ENCODE measurements at regions of chr1 and their contacts with region 1.

Region 1: DNA sequence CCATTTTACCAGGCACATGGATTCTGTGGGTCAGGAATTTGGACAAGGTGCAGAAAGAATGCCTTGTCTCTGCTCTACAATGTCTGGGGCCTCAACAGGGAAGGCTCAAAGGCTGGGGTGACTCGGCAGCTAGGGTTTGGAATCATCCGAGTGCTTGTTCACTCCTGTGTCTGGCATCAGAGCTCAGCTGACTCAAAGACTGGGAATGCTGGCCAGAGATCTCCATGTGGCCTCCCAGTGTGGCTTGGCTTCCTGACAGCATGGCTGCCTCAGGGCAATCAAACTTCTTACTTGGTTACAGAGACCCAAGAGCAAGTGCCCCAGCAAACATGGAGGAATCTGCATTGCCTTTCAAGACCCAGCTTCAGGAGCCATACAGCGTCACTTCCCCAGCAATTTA is 110.5 kb downstream of the TOMM20 start:
- DNase-seq: no peak
- ATAC-seq: no peak
- H3K4me3 Mint-ChIP-seq: no peak overlapping the region
- H3K27ac Mint-ChIP-seq: peak overlapping the region; percentile 68
- H3K4me1 Mint-ChIP-seq: peaks cover 72% of the 10 kb centered on the region
- H3K27me3 Mint-ChIP-seq: no peaks in the 10 kb centered on the region
- CTCF ChIP-seq: no peak

Region 2: GRCh38 chr1:234505775-234506114 is 512.4 kb before region 1 on chr1:
- CTCF ChIA-PET with region 1: no interaction called
- POLR2A ChIA-PET with region 1: no interaction called
- intact Hi-C with region 1: no loop called
- DNase-seq: no peak
- ATAC-seq: no peak
- H3K4me3 Mint-ChIP-seq: no peak overlapping the region
- H3K27ac Mint-ChIP-seq: no peak overlapping the region
- H3K4me1 Mint-ChIP-seq: peaks cover 16% of the 10 kb centered on the region
- H3K27me3 Mint-ChIP-seq: no peaks in the 10 kb centered on the region
- CTCF ChIP-seq: no peak

Region 3: DNA sequence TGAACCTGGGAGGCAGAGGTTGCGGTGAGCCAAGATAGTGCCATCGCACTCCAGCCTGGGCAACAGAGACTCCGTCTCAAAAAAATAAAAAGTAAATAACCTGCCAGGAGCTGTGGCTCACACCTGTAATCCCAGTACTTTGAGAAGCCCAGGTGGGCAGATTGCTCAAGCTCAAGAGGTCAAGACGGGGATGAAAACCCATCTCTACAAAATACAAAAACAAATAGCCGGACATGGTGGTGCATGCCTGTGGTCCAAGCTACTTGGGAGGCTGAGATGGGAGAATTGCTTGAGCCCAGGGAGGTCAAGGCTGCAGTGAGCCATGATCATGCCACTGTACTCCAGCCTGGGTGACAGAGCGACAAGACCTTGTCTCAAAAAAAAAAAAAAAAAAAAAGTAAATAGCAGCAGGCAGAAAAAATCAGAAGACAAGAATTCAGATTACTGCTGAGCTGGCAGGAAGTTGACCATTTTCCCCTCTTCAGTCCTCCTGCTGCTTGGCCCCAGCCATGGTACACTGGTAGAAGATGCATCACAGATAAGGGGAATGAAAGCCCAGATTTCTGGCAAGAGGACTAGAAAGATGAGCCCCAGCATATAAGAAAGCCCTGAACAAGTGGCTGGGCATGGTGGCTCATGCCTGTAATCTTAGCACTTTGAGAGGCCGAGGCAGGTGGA is 12.9 kb after region 1 on chr1:
- CTCF ChIA-PET with region 1: no interaction called
- POLR2A ChIA-PET with region 1: interaction called, 12 read pairs
- intact Hi-C with region 1: loop called (anchors 2 kb)
- DNase-seq: no peak
- ATAC-seq: no peak
- H3K4me3 Mint-ChIP-seq: no peak overlapping the region
- H3K27ac Mint-ChIP-seq: no peak overlapping the region
- H3K4me1 Mint-ChIP-seq: peaks cover 16% of the 10 kb centered on the region
- H3K27me3 Mint-ChIP-seq: no peaks in the 10 kb centered on the region
- CTCF ChIP-seq: no peak

Region 4: DNA sequence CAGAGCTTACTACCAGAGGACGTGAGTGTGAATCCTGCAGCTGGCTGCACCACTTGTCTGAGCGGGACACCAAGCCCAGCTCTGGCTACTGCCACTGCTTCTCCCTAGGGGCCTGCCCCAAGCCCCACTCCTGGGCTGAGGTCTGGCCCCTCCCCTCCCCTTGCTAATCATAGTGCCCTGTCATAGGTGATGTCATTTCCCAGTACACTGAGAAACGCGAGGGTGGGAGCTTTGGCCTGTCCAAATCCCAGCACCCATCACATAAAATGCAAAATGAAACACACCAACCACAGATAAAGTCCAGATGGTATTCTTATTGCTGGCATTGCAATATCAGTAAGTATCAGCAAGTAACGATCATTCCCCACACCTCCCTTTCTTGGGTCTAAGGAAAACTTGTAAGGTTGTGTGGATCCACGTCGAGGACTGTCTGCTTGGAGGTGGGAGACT is 32.8 kb after region 1 on chr1:
- CTCF ChIA-PET with region 1: no interaction called
- POLR2A ChIA-PET with region 1: interaction called, 115 read pairs
- intact Hi-C with region 1: no loop called
- DNase-seq: peak; percentile 30
- ATAC-seq: peak; percentile 51
- H3K4me3 Mint-ChIP-seq: peak overlapping the region; percentile 24
- H3K27ac Mint-ChIP-seq: peak overlapping the region; percentile 60
- H3K4me1 Mint-ChIP-seq: peaks cover 50% of the 10 kb centered on the region
- H3K27me3 Mint-ChIP-seq: no peaks in the 10 kb centered on the region
- CTCF ChIP-seq: no peak